ENCODE measurements at regions of chr15 and their contacts with region 1.

Region 1: DNA sequence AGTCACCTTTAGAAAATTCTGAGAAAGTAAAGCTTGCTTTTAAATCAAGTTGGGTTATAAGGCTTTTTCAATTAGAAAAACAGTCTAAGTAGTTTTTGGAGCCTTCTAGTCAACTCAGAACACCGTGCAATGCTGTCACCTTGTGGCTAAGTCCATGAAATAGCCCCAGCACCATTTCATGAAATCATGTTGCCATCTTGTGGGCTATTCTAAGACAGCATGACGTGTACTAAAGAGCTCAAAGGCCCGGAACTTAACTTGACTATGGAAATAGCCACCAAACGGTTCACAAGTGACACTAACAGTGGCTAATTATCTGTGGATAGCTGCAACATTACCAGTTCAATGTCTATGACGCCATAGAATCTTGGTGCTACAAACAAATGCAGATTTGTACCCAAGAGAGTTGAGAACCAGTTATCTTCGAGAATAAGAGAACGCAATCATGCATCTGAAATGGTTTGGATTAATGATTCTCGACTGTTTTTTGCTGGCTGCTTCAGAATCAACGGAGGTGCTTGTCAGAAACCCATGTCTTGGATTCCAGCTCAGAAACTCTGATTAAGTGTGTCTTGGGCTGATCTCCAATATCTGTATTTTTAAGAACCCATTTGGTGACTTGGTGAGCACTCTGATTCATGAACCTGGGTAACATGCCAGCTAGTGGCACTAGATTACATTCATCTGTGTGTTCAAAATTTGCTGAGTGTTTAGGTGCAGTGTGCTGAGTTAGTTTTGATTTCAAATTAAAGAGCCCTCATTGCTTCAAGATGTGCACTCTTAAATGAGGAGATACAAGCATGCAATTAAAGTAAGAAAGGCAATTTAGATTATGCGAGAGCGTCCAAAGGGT is 111.2 kb upstream of the MCTP2 start:
- DNase-seq: no peak
- ATAC-seq: peak; percentile 85
- H3K4me3 Mint-ChIP-seq: no peak overlapping the region
- H3K27ac Mint-ChIP-seq: no peak overlapping the region
- H3K4me1 Mint-ChIP-seq: no peaks in the 10 kb centered on the region
- H3K27me3 Mint-ChIP-seq: peaks cover 3% of the 10 kb centered on the region
- CTCF ChIP-seq: no peak

Region 2: DNA sequence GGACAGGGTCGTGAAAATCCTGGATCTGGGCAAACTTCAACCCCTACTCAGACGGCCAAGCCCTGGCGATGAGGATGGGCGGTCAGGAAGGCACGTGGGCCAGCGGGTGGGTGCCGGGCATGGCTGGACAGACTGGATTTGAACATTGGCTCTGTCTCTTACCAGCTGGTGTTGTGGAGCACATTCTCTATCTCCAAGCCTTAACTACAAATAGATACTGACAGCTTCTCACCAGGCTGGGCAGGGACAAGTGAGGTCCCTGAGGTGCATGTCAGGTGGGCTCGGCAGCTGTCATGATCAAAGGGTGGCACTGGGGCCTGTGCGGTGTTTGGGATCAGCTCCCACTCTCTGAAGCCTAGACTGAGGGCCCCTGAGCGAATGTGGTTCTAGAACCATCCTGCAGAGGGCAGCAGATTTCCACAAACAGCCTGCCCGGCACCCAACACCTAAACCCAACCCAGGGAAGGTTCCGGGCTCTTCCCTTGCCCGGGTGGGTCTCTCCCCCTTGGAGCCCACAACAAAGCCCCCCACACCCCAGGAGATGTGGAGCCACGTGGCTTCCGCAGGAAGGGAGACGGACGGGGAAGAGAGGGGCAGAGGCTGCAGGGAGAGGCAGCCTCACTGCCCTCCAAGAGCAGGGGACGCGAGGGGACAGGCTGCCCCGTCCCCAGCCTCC is 1089.6 kb before region 1 on chr15:
- CTCF ChIA-PET with region 1: interaction called, 7 read pairs
- POLR2A ChIA-PET with region 1: no interaction called
- intact Hi-C with region 1: loop called (anchors 2 kb)
- DNase-seq: no peak
- ATAC-seq: peak; percentile 89
- H3K4me3 Mint-ChIP-seq: no peak overlapping the region
- H3K27ac Mint-ChIP-seq: no peak overlapping the region
- H3K4me1 Mint-ChIP-seq: peaks cover 10% of the 10 kb centered on the region
- H3K27me3 Mint-ChIP-seq: no peaks in the 10 kb centered on the region
- CTCF ChIP-seq: peak; percentile 41

Region 3: DNA sequence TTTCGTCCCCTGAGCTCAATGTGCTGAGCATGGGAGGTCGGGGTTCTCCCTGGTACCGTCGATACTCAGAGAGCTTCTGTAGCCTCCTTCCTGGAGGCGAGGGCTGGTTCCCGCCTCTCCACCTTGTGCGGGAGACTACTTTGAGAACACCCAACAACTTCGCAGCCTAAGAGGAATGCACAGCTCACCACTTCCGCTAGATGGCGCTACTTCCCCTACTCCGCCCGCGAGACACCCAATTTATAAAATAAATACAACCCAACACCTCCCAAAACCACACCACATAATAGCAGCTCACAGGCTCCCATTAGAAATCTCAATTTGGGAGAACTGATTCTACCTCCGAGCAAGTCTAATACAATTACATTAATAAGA is 1032.3 kb before region 1 on chr15:
- CTCF ChIA-PET with region 1: interaction called, 5 read pairs
- POLR2A ChIA-PET with region 1: no interaction called
- intact Hi-C with region 1: loop called (anchors 5 kb)
- DNase-seq: no peak
- ATAC-seq: no peak
- H3K4me3 Mint-ChIP-seq: peak overlapping the region; percentile 71
- H3K27ac Mint-ChIP-seq: no peak overlapping the region
- H3K4me1 Mint-ChIP-seq: peaks cover 21% of the 10 kb centered on the region
- H3K27me3 Mint-ChIP-seq: peaks cover 64% of the 10 kb centered on the region
- CTCF ChIP-seq: peak; percentile 22

Region 4: GRCh38 chr15:93997084-93997918 is 122.8 kb before region 1 on chr15:
- CTCF ChIA-PET with region 1: no interaction called
- POLR2A ChIA-PET with region 1: no interaction called
- intact Hi-C with region 1: loop called (anchors 2 kb)
- DNase-seq: no peak
- ATAC-seq: no peak
- H3K4me3 Mint-ChIP-seq: no peak overlapping the region
- H3K27ac Mint-ChIP-seq: no peak overlapping the region
- H3K4me1 Mint-ChIP-seq: no peaks in the 10 kb centered on the region
- H3K27me3 Mint-ChIP-seq: no peaks in the 10 kb centered on the region
- CTCF ChIP-seq: peak; percentile 69